ENCODE measurements at regions of chr9 and their contacts with region 1.

Region 1: DNA sequence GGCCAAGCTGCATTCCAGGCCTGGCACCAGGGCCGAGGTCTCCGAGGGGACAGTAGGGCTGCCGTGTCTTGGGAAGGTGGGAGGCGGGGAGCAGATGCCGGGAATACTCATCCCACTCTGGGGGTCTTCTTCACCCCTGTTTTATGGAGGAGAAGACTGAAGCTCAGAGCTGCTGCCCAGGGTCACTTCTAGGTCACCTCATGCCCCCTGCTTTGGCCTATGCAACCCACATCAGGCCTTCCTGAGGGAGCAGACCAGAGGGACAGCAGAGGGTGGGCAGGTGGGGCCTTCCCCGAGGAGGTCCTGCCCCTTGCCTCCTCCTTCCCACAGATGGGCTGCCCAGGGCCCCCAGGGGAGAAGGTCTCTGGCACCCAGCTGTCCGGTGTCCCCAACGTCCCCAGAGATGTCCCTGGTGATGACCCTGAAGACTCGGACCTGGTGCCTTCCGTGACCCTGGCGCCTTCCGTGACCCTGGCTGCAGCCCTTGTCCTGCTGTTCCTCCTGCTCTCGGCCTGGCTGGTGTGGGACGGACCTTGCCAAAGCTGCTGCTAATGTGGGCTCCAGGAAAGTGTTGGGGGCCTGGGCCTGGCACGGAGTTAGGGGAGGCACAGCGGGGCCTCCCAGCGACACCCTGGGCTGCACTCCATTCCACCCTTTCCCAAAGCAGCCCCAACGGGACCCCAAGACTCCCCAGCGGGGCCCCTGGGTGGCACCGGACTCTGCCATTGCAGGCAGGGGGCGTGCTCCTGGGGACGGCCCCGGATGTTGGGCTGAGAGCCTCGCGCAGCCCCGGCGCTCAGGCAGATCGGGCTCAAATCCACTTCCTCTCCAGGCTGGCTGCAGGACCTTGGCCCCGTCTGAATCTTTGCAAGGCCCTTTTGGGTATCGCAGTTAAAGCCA is 6.7 kb upstream of the SLC2A6 start:
- DNase-seq: no peak
- H3K4me3 ChIP-seq: no peak overlapping the region
- H3K27ac ChIP-seq: no peak overlapping the region
- H3K4me1 ChIP-seq: peaks cover 0 to 12% of the 10 kb centered on the region in 2 experiments; a peak in 1 of 4 replicates
- H3K27me3 ChIP-seq: no peaks in the 10 kb centered on the region
- CTCF ChIP-seq: no peak
- EP300 ChIP-seq: no peak
- RAD21 ChIP-seq: no peak

Region 2: GRCh38 chr9:133184962-133185361 is 300.6 kb before region 1 on chr9:
- CTCF ChIA-PET with region 1: interaction called, 20 read pairs
- POLR2A ChIA-PET with region 1: no interaction called
- DNase-seq: peak; percentile 77
- H3K4me3 ChIP-seq: peak overlapping the region in 1 of 2 experiments; percentile 25; a peak in 1 of 4 replicates
- H3K27ac ChIP-seq: no peak overlapping the region
- H3K4me1 ChIP-seq: no peaks in the 10 kb centered on the region
- H3K27me3 ChIP-seq: peaks cover 44% of the 10 kb centered on the region
- CTCF ChIP-seq: peak; percentile 63
- EP300 ChIP-seq: no peak
- RAD21 ChIP-seq: peak; percentile 84

Region 3: GRCh38 chr9:133342069-133342406 is 143.6 kb before region 1 on chr9:
- CTCF ChIA-PET with region 1: interaction called, 10 read pairs
- POLR2A ChIA-PET with region 1: no interaction called
- DNase-seq: peak; percentile 44
- H3K4me3 ChIP-seq: no peak overlapping the region
- H3K27ac ChIP-seq: no peak overlapping the region
- H3K4me1 ChIP-seq: peaks cover 0 to 11% of the 10 kb centered on the region in 2 experiments; a peak in 1 of 4 replicates
- H3K27me3 ChIP-seq: no peaks in the 10 kb centered on the region
- CTCF ChIP-seq: no peak
- EP300 ChIP-seq: no peak
- RAD21 ChIP-seq: no peak

Region 4: DNA sequence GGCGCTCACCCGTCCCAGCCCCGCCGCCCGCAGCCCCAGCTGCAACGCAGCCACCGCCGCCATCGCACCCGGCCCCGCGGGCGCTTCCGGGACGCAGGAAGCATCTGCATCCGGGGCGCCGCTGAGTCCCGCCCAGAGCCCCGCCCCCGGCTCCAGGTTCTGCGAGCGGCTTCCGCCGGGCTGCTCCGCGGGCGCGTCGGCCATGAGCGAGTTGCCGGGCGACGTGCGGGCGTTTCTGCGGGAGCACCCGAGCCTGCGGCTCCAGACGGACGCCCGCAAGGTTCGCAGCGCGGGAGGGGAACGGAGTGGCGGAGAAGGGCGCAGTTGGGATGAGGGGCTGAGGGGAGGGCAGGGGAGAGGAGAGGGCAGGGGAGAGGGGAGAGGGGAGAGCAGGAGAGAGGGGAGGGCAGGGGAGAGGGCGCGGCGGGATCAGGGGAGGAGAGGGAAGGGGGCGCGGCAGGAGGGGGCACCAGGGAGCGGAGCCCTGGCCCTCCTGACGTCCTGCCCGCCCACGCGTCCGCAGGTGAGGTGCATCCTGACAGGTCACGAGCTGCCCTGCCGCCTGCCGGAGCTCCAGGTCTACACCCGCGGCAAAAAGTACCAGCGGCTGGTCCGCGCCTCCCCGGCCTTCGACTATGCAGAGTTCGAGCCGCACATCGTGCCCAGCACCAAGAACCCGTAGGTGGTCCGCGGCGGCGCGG is 129.1 kb before region 1 on chr9 and contains the starts of genes SURF1 and SURF2:
- CTCF ChIA-PET with region 1: interaction called, 19 read pairs
- POLR2A ChIA-PET with region 1: no interaction called
- DNase-seq: peak; percentile 97
- H3K4me3 ChIP-seq: peak within 1 kb of the TSS; percentile 86 to 90
- H3K27ac ChIP-seq: peak within 1 kb of the TSS; percentile 34 to 68; a peak in 3 of 4 replicates
- H3K4me1 ChIP-seq: peaks cover 13 to 33% of the 10 kb centered on the region in 2 experiments; a peak in 2 of 4 replicates
- H3K27me3 ChIP-seq: no peaks in the 10 kb centered on the region
- CTCF ChIP-seq: no peak
- EP300 ChIP-seq: no peak
- RAD21 ChIP-seq: no peak
- polyA plus RNA-seq, gene SURF1: 97.9 and 103 TPM in 2 replicates
- polyA plus RNA-seq, gene SURF2: 35.7 and 46.8 TPM in 2 replicates

Region 5: GRCh38 chr9:133406480-133407307 is 78.9 kb before region 1 on chr9:
- CTCF ChIA-PET with region 1: interaction called, 23 read pairs
- POLR2A ChIA-PET with region 1: no interaction called
- DNase-seq: peak; percentile 91
- H3K4me3 ChIP-seq: peak overlapping the region in 1 of 2 experiments; percentile 33; a peak in 1 of 4 replicates
- H3K27ac ChIP-seq: no peak overlapping the region
- H3K4me1 ChIP-seq: no peaks in the 10 kb centered on the region
- H3K27me3 ChIP-seq: no peaks in the 10 kb centered on the region
- CTCF ChIP-seq: peak; percentile 89
- EP300 ChIP-seq: no peak
- RAD21 ChIP-seq: peak; percentile 72

Region 6: GRCh38 chr9:133658442-133659431 is 173.1 kb after region 1 on chr9:
- CTCF ChIA-PET with region 1: no interaction called
- POLR2A ChIA-PET with region 1: no interaction called
- DNase-seq: no peak
- H3K4me3 ChIP-seq: no peak overlapping the region
- H3K27ac ChIP-seq: peak overlapping the region in 1 of 2 experiments; percentile 50; a peak in 1 of 4 replicates
- H3K4me1 ChIP-seq: peaks cover 0 to 48% of the 10 kb centered on the region in 2 experiments; a peak in 1 of 4 replicates
- H3K27me3 ChIP-seq: no peaks in the 10 kb centered on the region
- CTCF ChIP-seq: no peak
- EP300 ChIP-seq: no peak
- RAD21 ChIP-seq: no peak

Region 7: GRCh38 chr9:134055981-134056461 is 570.4 kb after region 1 on chr9:
- CTCF ChIA-PET with region 1: no interaction called
- POLR2A ChIA-PET with region 1: no interaction called
- DNase-seq: peak; percentile 61
- H3K4me3 ChIP-seq: no peak overlapping the region
- H3K27ac ChIP-seq: peak overlapping the region in 1 of 2 experiments; percentile 65; a peak in 1 of 4 replicates
- H3K4me1 ChIP-seq: peaks cover 6 to 55% of the 10 kb centered on the region in 2 experiments; a peak in 2 of 4 replicates
- H3K27me3 ChIP-seq: no peaks in the 10 kb centered on the region
- CTCF ChIP-seq: no peak
- EP300 ChIP-seq: no peak
- RAD21 ChIP-seq: no peak